ENCODE measurements at regions of chr2 and their contacts with region 1.

Region 1: DNA sequence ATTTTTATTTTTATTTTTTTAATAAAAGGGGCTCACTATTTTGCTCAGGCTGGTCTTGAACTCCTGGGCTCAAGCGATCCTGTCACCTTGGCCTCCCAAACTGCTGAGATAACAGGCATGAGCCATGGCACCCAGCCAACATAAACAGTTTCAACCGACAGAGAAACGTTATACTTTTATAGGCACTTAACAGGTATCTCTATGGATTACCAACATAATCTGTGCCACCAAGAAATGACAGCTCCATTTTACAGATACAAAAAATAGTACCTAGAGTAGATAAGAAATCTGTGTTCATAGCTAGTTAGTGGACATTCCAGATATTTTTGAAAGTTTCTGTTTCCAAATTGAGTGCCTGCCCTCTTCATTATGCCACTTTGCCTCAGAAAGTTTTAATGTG is 1316.7 kb downstream of the LRP1B start:
- DNase-seq: no peak
- H3K4me3 ChIP-seq: no peak overlapping the region
- H3K27ac ChIP-seq: no peak overlapping the region
- H3K4me1 ChIP-seq: no peaks in the 10 kb centered on the region
- H3K27me3 ChIP-seq: no peaks in the 10 kb centered on the region
- CTCF ChIP-seq: no peak
- EP300 ChIP-seq: no peak
- POLR2A ChIP-seq: no peak

Region 2: GRCh38 chr2:139585101-139585500 is 1229.0 kb before region 1 on chr2:
- in situ Hi-C with region 1: no loop called
- intact Hi-C with region 1: loop called (anchors 5 kb)
- DNase-seq: no peak
- H3K4me3 ChIP-seq: no peak overlapping the region
- H3K27ac ChIP-seq: no peak overlapping the region
- H3K4me1 ChIP-seq: no peaks in the 10 kb centered on the region
- H3K27me3 ChIP-seq: no peaks in the 10 kb centered on the region
- CTCF ChIP-seq: no peak
- EP300 ChIP-seq: no peak
- POLR2A ChIP-seq: no peak

Region 3: DNA sequence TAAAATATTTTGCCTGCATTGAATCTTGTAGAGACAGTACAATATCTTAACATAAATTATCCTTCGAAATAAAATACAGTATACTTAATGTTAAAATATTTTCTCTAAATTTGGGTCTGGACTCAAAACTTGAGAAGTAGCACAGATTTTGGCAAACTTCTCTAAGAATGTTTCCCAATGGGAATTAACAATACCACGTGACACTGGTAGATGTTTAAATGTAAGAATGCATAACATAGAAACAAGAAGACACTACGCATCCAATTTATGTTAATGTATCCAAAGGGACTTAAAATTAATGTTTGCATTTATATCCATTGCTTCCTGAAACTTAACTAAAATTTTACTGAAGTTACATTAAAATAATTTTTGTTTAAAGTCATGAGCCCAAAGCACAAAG is 144.2 kb before region 1 on chr2:
- in situ Hi-C with region 1: no loop called
- intact Hi-C with region 1: no loop called
- DNase-seq: no peak
- H3K4me3 ChIP-seq: no peak overlapping the region
- H3K27ac ChIP-seq: no peak overlapping the region
- H3K4me1 ChIP-seq: no peaks in the 10 kb centered on the region
- H3K27me3 ChIP-seq: no peaks in the 10 kb centered on the region
- CTCF ChIP-seq: no peak
- EP300 ChIP-seq: no peak
- POLR2A ChIP-seq: no peak